ENCODE measurements at regions of chr1 and their contacts with region 1.

Region 1: GRCh38 chr1:179809506-179810366 is 66.6 kb downstream of the FAM163A start:
- DNase-seq: peak; percentile 35
- H3K4me3 ChIP-seq: no peak overlapping the region
- H3K27ac ChIP-seq: no peak overlapping the region
- H3K4me1 ChIP-seq: no peaks in the 10 kb centered on the region
- H3K27me3 ChIP-seq: no peaks in the 10 kb centered on the region
- CTCF ChIP-seq: peak; percentile 89

Region 2: DNA sequence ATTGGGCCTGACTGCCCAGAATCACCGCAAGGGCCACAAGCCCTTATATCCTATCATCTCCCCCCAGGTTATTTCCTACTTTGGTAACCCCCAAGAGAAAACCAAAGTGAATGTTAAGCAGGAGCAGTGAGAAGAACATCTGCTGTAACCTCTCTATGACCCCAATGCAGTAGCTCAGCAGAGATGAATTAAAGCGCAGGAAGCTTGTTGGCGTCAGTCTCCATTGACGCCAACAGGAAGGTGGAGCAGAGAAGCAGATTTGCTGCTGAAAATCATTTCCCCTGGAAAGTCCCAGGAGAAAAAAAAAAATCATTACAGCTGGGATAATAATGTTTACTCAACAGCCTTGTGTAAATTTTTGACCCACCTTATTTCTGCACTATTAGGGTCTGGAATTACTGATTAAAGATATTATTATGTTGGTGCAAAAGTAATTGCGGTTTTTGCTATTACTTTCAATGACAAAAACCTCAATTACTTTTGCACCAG is 99.9 kb before region 1 on chr1:
- intact Hi-C with region 1: loop called (anchors 2 kb)
- DNase-seq: no peak
- H3K4me3 ChIP-seq: no peak overlapping the region
- H3K27ac ChIP-seq: no peak overlapping the region
- H3K4me1 ChIP-seq: no peaks in the 10 kb centered on the region
- H3K27me3 ChIP-seq: no peaks in the 10 kb centered on the region
- CTCF ChIP-seq: no peak

Region 3: DNA sequence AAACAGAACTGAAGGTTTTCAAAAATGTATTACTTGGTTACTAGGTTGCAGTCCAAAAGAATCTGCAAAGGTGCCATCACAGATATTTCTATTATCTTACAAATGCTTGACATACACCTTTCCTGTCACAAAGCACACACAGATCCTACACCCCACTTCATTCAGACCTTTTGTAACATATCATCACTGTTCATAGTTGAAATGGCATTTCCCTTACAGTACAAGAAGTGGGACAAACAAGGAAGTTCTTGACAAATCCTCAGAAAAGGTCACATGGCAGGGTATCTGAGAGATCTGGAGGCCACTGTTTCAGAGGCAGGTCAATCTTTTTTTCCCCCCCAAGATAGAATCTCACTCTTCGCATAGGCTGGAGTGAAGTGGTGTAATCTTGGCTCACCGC is 46.6 kb after region 1 on chr1:
- intact Hi-C with region 1: no loop called
- DNase-seq: no peak
- H3K4me3 ChIP-seq: no peak overlapping the region
- H3K27ac ChIP-seq: no peak overlapping the region
- H3K4me1 ChIP-seq: no peaks in the 10 kb centered on the region
- H3K27me3 ChIP-seq: no peaks in the 10 kb centered on the region
- CTCF ChIP-seq: no peak

Measured in colonic mucosa (tissue), 4 donors.